ENCODE measurements at regions of chr13 and their contacts with region 1.

Region 1: DNA sequence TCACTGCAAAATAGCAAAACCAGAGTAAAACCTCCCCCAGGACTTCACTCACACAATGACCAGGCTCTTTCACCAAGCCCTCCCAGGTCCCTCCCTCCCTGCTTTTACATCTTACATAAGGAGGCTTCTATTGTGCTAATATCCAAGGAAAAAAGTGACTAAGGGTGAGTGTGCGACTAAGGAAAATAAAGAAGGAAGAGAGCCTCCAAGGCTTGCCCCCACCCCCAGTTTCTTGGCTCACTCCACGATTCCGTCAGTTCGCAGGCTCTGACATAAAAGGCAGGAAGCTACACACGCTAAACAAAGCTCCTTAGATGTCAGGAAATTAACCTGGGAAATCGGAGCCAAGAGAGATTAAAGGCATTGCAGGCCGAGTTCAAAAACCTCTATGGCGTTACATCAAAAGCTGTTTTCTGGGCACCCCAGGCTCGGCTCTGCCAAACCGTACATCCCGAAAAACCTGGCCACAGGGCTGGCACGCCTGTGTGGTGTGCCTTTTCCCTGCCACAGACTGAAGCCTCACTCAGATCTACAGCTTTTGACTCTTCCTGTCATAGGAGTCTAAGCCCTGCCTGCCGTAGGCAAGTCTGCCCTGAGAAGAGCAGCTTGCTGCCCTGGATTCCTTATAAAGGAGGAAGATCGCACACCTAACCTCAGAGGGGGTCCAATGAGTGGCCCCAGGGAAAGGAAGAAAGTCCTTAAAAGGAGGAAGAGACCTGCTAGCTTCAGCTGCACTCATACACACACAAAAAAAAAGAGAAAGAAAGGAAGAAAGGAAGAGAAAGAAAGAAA is 67.0 kb upstream of the SERP2 start:
- DNase-seq: no peak
- ATAC-seq: no peak

Region 2: GRCh38 chr13:44191504-44192171 is 115.0 kb before region 1 on chr13:
- intact Hi-C with region 1: loop called (anchors 5 kb)
- DNase-seq: no peak
- ATAC-seq: peak; percentile 93